GM12878 (cell line): ENCODE measurements at regions of chrX and their contacts with region 1.

Region 1: DNA sequence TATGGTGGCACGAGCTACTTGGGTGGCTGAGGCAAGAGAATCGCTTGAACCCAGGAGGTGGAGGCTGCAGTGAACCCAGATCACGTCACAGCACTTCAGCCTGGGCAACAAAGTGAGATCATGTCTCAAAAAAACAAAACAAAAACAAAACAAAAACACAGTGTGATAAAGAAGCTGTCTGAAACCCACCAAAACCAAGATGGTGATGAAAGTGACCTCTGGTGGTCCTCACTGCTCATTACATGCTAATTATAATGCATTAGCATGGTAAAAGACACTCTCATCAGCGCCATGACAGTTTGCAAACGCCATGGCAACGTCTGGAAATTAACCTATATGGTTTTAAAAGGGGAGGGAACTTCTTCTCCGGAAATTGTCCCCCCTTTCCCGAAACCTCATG is 29.4 kb upstream of the OPHN1 start:
- DNase-seq: no peak
- ATAC-seq: peak; percentile 72
- H3K4me3 ChIP-seq: no peak overlapping the region
- H3K27ac ChIP-seq: no peak overlapping the region
- H3K4me1 ChIP-seq: no peaks in the 10 kb centered on the region
- H3K27me3 ChIP-seq: no peaks in the 10 kb centered on the region
- CTCF ChIP-seq: peak; percentile 19 to 62 (median 34); a peak in 4 of 6 replicates
- EP300 ChIP-seq: no peak
- POLR2A ChIP-seq: no peak
- RAD21 ChIP-seq: peak; percentile 27; the same call in 1 of the 2 replicates

Region 2: DNA sequence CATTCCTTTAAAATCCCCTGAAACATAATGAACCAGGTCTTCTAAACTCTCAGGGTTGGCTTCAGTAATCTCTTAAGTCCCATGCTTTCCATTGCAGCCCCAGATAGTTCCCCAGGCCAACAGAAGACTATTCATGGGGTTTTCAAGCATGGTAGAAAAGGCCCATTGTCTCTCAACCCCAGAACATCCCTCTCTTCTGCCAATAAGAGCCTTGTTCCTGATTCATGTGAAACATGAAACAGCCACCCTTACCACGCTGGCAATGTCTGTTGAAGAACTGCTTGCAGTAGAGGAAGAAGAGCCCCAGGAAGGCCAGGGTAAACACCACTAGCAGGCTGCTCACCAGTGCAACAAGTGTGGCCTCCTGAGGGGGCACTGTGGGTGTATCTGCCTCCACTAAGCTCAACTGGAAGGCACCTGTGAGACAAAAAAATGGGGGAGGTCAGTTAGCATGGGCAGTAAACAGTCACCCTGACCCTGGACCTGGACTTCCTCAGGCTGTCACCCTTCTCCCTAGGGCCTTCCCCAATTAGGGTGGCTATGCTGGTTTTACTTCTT is 1860.2 kb before region 1 on chrX:
- CTCF ChIA-PET with region 1: no interaction called
- POLR2A ChIA-PET with region 1: no interaction called
- RAD21 ChIA-PET with region 1: no interaction called
- SMC1A ChIA-PET with region 1: no interaction called
- in situ Hi-C with region 1: no loop called
- intact Hi-C with region 1: loop called (anchors 10 kb)
- DNase-seq: no peak
- ATAC-seq: peak; percentile 69
- H3K4me3 ChIP-seq: no peak overlapping the region
- H3K27ac ChIP-seq: no peak overlapping the region
- H3K4me1 ChIP-seq: no peaks in the 10 kb centered on the region; the same call in 1 of the 2 replicates
- H3K27me3 ChIP-seq: no peaks in the 10 kb centered on the region
- CTCF ChIP-seq: no peak
- EP300 ChIP-seq: no peak
- POLR2A ChIP-seq: no peak
- RAD21 ChIP-seq: no peak

Region 3: DNA sequence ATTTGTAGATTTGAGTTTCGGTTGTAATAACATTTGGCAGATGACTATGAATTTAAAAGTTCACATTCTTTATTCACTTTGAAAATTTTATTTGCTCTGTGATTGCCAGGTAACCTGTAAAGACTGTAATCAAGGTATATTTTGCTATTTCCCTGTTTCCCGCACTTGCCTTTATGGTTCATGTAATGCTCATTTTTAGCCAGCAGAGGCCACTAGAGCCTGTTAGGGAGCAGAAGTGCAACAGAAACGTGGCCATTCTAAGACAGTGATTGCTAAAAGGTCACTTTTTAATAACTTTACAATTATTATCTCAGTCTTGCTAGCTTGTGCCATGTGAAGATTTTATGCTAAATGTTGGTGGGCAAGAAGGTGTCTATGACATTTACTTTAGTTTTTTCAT is 48.6 kb after region 1 on chrX:
- CTCF ChIA-PET with region 1: no interaction called
- POLR2A ChIA-PET with region 1: no interaction called
- RAD21 ChIA-PET with region 1: no interaction called
- SMC1A ChIA-PET with region 1: no interaction called
- in situ Hi-C with region 1: no loop called
- intact Hi-C with region 1: no loop called
- DNase-seq: no peak
- ATAC-seq: peak; percentile 78
- H3K4me3 ChIP-seq: no peak overlapping the region
- H3K27ac ChIP-seq: no peak overlapping the region
- H3K4me1 ChIP-seq: no peaks in the 10 kb centered on the region
- H3K27me3 ChIP-seq: no peaks in the 10 kb centered on the region
- CTCF ChIP-seq: peak; percentile 77 to 82 (median 82)
- EP300 ChIP-seq: no peak
- POLR2A ChIP-seq: no peak
- RAD21 ChIP-seq: peak; percentile 87